ENCODE measurements at regions of chr6 and their contacts with region 1.

Region 1: DNA sequence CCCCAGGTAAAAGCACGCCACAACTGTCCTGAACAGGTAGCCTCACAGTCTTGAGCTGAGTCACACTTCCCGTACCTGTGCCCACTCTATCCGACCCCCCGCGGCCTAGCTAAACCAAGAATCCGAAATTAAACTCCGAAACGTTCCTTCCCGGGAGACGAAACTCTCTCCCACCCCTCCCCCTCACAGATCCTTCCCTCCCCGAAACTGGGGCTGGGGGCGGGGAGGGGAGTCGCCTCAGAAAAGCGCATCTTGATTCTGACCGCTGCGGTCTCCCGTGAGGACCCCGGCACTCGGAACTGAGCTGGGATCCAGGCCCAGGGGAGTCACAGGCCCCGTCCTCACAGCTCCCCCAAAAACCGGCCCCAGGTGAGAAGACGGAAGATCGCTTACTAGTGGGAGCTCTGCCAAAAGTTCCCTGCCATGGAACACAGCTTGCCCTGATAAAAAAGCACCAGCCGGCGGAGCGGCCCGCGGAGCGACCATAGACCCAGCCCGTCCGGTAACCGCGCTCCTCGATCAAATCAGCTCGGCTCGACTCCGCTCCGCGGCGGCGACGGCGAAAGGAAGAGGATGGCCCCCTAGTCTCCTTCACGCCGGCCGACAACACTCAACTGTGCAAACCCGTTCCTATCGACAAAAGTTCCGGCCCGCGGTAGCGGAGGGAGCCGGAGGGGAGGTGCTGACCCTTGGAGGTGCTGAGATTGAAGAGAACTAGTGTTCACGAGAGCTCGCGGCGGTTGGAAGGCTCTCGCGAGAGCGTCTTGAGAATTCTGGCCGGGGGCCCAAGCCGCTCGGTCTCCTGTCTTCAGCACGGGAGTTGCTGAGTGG is at the start of gene CCNC:
- DNase-seq: peak; percentile 89
- ATAC-seq: peak; percentile 97
- H3K4me3 Mint-ChIP-seq: peak within 1 kb of the TSS; percentile 94
- H3K27ac Mint-ChIP-seq: peak within 1 kb of the TSS; percentile 92
- H3K4me1 Mint-ChIP-seq: peaks cover 20% of the 10 kb centered on the region
- H3K27me3 Mint-ChIP-seq: no peaks in the 10 kb centered on the region
- total RNA-seq, gene CCNC: 43.5 to 46.4 TPM

Region 2: GRCh38 chr6:99425647-99426453 is 142.5 kb before region 1 on chr6:
- POLR2A ChIA-PET with region 1: interaction called, 10 read pairs
- DNase-seq: peak; percentile 68
- ATAC-seq: peak; percentile 57
- H3K4me3 Mint-ChIP-seq: peak overlapping the region; percentile 99
- H3K27ac Mint-ChIP-seq: peak overlapping the region; percentile 99
- H3K4me1 Mint-ChIP-seq: peaks cover 50% of the 10 kb centered on the region
- H3K27me3 Mint-ChIP-seq: no peaks in the 10 kb centered on the region

Region 3: DNA sequence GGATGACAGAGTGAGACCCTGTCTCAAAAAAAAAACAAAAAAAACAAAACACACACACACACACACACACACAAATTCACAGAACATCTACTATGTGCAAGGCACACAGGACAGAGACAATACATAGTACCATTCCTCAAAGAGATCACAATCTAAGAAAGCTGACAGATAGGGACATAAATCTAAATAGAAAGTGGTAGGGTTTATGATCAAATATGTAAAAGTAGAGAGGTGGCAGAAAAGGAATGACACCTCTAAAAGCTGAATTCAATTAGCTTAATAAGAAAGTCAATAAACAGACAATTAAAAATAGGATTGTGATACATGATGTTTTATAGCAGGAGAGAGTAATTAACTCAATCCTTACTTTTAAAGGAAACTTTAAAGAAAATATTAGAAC is 94.6 kb before region 1 on chr6:
- POLR2A ChIA-PET with region 1: interaction called, 11 read pairs
- DNase-seq: no peak
- ATAC-seq: no peak
- H3K4me3 Mint-ChIP-seq: no peak overlapping the region
- H3K27ac Mint-ChIP-seq: no peak overlapping the region
- H3K4me1 Mint-ChIP-seq: no peaks in the 10 kb centered on the region
- H3K27me3 Mint-ChIP-seq: no peaks in the 10 kb centered on the region

Region 4: DNA sequence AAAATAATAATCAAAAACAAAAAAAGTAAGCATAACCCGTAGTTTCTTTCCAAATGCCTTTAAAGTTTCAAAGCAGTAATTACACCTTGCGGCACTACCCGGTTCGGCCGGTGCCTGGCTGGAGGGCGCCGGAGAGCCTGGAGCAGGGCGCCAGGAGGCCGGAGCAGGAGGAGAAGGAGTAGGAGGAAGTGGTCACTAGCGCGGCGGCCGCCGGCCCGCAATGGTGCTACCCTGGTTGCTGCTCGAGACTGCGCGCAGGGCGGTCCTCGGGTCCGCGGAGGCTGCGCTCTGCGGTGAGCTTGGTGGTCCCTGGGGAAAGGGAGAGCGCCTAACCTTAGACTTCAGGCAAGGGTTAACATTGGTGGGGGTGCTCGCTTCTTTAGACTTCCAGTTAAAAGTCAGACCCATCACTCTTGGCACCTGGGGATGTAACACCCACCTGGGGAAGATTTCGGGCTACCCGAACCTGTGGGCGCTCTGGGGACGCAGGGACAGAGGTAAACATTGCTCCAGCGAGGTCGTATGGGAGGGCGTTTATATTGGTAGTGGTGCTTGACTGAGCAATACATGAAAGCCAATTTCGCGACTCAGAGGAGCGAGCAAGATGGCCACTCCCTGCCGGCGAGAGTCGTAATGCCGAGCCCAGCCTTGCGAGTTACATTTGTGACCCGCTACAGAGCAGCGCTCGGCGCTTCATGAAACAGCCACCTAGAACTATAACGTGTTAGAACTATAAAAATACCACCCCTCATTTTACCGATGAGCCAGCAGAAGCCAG is 47.3 kb before region 1 on chr6:
- POLR2A ChIA-PET with region 1: interaction called, 20 read pairs
- DNase-seq: peak; percentile 82
- ATAC-seq: peak; percentile 93
- H3K4me3 Mint-ChIP-seq: peak overlapping the region; percentile 95
- H3K27ac Mint-ChIP-seq: peak overlapping the region; percentile 91
- H3K4me1 Mint-ChIP-seq: peaks cover 13% of the 10 kb centered on the region
- H3K27me3 Mint-ChIP-seq: peaks cover 7% of the 10 kb centered on the region

Region 5: GRCh38 chr6:99553888-99554287 is 14.4 kb before region 1 on chr6:
- POLR2A ChIA-PET with region 1: no interaction called
- DNase-seq: no peak
- ATAC-seq: no peak
- H3K4me3 Mint-ChIP-seq: no peak overlapping the region
- H3K27ac Mint-ChIP-seq: no peak overlapping the region
- H3K4me1 Mint-ChIP-seq: peaks cover 2% of the 10 kb centered on the region
- H3K27me3 Mint-ChIP-seq: no peaks in the 10 kb centered on the region